CD4-positive, alpha-beta T cell (primary cell): ENCODE measurements at regions of chr15 and their contacts with region 1.

Region 1: GRCh38 chr15:86082619-86083380 is 3.1 kb downstream of the AGBL1 start:
- DNase-seq: peak in 2 of 14 experiments; percentile 12 to 18
- ATAC-seq: peak; percentile 32
- H3K4me3 ChIP-seq: no peak overlapping the region
- H3K4me3 Mint-ChIP-seq: peak overlapping the region; percentile 64
- H3K27ac ChIP-seq: no peak overlapping the region
- H3K27ac Mint-ChIP-seq: no peak overlapping the region
- H3K4me1 ChIP-seq: peaks cover 10% of the 10 kb centered on the region
- H3K4me1 Mint-ChIP-seq: peaks cover 26% of the 10 kb centered on the region
- H3K27me3 ChIP-seq: no peaks in the 10 kb centered on the region
- H3K27me3 Mint-ChIP-seq: peaks cover 7% of the 10 kb centered on the region
- CTCF ChIP-seq: no peak

Region 2: GRCh38 chr15:85718271-85718971 is 364.4 kb before region 1 on chr15:
- CTCF ChIA-PET with region 1: no interaction called
- POLR2A ChIA-PET with region 1: no interaction called
- intact Hi-C with region 1: no loop called
- DNase-seq: no peak
- ATAC-seq: no peak
- H3K4me3 ChIP-seq: no peak overlapping the region
- H3K4me3 Mint-ChIP-seq: no peak overlapping the region
- H3K27ac ChIP-seq: no peak overlapping the region
- H3K27ac Mint-ChIP-seq: peak overlapping the region; percentile 76
- H3K4me1 ChIP-seq: no peaks in the 10 kb centered on the region
- H3K4me1 Mint-ChIP-seq: peaks cover 67% of the 10 kb centered on the region
- H3K27me3 ChIP-seq: no peaks in the 10 kb centered on the region
- H3K27me3 Mint-ChIP-seq: no peaks in the 10 kb centered on the region
- CTCF ChIP-seq: no peak

Region 3: GRCh38 chr15:86009727-86010126 is 73.1 kb before region 1 on chr15:
- CTCF ChIA-PET with region 1: no interaction called
- POLR2A ChIA-PET with region 1: no interaction called
- intact Hi-C with region 1: no loop called
- DNase-seq: no peak
- ATAC-seq: no peak
- H3K4me3 ChIP-seq: no peak overlapping the region
- H3K4me3 Mint-ChIP-seq: no peak overlapping the region
- H3K27ac ChIP-seq: no peak overlapping the region
- H3K27ac Mint-ChIP-seq: no peak overlapping the region
- H3K4me1 ChIP-seq: no peaks in the 10 kb centered on the region
- H3K4me1 Mint-ChIP-seq: no peaks in the 10 kb centered on the region
- H3K27me3 ChIP-seq: no peaks in the 10 kb centered on the region
- H3K27me3 Mint-ChIP-seq: no peaks in the 10 kb centered on the region
- CTCF ChIP-seq: no peak

Region 4: DNA sequence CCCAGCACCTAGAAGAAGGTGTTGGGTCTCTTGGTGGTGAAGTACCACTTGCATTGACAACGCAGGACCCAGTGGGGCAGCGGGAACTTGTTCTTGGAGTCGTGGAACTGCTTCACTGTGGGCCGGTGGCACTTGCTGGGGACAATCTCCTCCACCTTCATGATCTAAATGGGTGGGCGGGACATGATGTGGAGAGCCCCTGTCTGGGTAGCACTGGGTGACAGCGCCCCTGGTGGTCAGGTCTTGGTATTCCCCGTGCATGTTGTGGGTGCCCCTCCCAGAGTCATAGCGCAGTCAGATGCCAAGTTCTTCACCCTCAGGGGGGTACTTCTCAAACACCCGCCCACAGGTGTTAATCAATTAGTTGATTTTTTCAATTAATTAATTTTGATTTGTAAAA is 57.0 kb after region 1 on chr15:
- CTCF ChIA-PET with region 1: no interaction called
- POLR2A ChIA-PET with region 1: no interaction called
- intact Hi-C with region 1: loop called in 1 of 2 experiments (anchors 10 kb)
- DNase-seq: peak in 3 of 14 experiments; percentile 0 to 12 (median 4)
- ATAC-seq: no peak
- H3K4me3 ChIP-seq: no peak overlapping the region
- H3K4me3 Mint-ChIP-seq: no peak overlapping the region
- H3K27ac ChIP-seq: no peak overlapping the region
- H3K27ac Mint-ChIP-seq: no peak overlapping the region
- H3K4me1 ChIP-seq: no peaks in the 10 kb centered on the region
- H3K4me1 Mint-ChIP-seq: no peaks in the 10 kb centered on the region
- H3K27me3 ChIP-seq: no peaks in the 10 kb centered on the region
- H3K27me3 Mint-ChIP-seq: peaks cover 40% of the 10 kb centered on the region
- CTCF ChIP-seq: no peak